KBM-7 (cell line): ENCODE measurements at regions of chr14 and their contacts with region 1.

Region 1: GRCh38 chr14:37230551-37231194 is 32.9 kb downstream of the MIPOL1 start:
- DNase-seq: peak; percentile 44

Region 2: DNA sequence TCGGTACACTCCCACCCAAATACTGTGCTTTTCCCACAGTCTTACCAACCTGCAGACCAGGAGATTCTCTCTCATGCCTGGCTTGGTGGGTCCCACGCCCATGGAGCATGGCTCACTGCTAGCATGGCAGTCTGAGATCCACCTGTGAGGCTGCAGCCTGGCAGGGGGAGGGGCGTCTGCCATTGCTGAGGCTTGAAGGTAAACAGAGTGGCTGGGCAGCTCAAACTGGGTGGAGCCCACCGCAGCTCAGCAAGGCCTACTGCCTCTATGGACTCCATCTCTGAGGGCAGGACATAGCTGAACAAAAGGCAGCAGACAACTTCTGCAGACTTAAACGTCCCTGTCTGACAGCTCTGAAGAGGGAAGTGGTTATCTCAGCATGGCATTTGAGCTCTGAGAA is 271.2 kb after region 1 on chr14:
- in situ Hi-C with region 1: no loop called
- DNase-seq: no peak

Region 3: DNA sequence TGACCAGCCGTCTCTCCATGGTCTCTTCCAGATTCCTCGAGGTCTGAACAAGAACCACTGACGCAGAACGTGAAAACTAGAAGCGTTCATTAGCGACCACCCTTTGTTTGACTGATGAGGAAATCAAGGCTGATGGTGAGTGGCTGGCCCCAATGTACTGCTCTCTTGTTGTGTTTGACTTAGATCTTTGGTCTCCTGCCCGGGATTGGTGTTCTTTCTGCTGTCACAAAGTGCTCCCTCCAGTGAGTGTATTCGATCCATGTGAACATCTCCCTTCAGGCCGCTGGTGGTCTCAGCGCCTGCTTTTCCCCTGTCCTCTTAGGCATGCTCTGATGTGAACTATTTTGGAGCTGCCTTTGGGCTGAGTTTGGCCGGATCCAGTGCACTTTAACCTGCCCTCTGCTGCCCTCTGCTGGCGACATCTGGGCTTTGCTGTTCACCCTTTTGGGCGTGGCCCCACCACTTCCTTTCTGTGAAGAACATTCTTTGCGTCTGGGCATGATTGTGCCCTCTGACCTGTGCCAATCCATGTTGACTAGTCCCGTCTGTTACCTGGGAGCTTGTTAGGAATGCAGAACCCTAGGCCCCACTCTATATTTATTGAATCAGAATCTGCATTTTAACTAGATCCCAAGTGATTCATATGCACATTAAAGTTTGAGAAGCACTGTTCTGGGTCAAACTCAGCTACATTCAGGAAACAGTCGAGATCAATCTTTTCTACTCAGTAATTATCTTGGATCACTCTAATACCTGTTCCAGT is 643.9 kb after region 1 on chr14:
- in situ Hi-C with region 1: loop called (anchors 25 kb)
- DNase-seq: peak; percentile 82